Activated naive CD4-positive, alpha-beta T cell treated with anti-CD3 and anti-CD28 coated beads, Interleukin-2, amount 10 ng/mL, durations not matched to agents 7 days and 5 days (primary cell): ENCODE measurements at regions of chr9 and their contacts with region 1.

Region 1: GRCh38 chr9:93143830-93144530 is 9.9 kb upstream of the NINJ1 start:
- DNase-seq: peak; percentile 80
- H3K4me3 Mint-ChIP-seq: peak overlapping the region; percentile 49
- H3K27ac Mint-ChIP-seq: peak overlapping the region; percentile 97
- H3K4me1 Mint-ChIP-seq: peaks cover 65% of the 10 kb centered on the region
- H3K27me3 Mint-ChIP-seq: no peaks in the 10 kb centered on the region

Region 2: DNA sequence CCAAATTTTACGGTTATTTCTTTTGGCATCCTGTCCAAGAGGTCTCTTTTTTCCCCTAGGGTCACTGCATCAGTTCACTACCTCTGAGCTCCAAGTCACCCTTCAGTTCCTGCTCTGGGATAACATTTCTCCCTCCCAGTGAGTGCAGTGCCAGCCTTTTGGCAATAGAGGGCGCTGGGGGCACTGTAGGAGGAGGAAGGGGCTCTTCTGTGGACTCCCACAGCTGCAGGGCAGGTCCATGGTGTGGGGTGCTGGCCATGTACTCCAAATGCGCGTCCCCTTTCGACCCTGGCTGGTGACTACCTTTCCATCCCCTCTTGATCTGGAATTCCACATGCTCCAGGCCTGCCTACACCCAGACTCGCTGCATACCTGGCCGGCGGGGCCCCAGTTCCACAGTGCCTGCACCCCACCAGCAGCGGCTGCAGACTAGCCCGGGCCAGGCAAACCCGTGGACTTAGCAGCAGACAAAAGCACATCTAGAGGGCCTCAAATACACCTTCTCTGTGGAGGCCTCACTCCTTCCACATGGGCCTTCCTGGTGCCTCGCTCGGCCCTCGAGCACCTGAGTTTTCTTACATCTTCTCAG is 10.4 kb after region 1 on chr9:
- CTCF ChIA-PET with region 1: interaction called, 12 read pairs
- DNase-seq: peak; percentile 62
- H3K4me3 Mint-ChIP-seq: no peak overlapping the region
- H3K27ac Mint-ChIP-seq: no peak overlapping the region
- H3K4me1 Mint-ChIP-seq: peaks cover 29% of the 10 kb centered on the region
- H3K27me3 Mint-ChIP-seq: no peaks in the 10 kb centered on the region

Region 3: GRCh38 chr9:93468763-93469456 is 324.9 kb after region 1 on chr9:
- CTCF ChIA-PET with region 1: no interaction called
- DNase-seq: no peak
- H3K4me3 Mint-ChIP-seq: no peak overlapping the region
- H3K27ac Mint-ChIP-seq: no peak overlapping the region
- H3K4me1 Mint-ChIP-seq: peaks cover 65% of the 10 kb centered on the region
- H3K27me3 Mint-ChIP-seq: no peaks in the 10 kb centered on the region